Activated CD4-positive, alpha-beta memory T cell treated with anti-CD3 and anti-CD28 coated beads for 36 hours (primary cell): ENCODE measurements at regions of chr16 and their contacts with region 1.

Region 1: DNA sequence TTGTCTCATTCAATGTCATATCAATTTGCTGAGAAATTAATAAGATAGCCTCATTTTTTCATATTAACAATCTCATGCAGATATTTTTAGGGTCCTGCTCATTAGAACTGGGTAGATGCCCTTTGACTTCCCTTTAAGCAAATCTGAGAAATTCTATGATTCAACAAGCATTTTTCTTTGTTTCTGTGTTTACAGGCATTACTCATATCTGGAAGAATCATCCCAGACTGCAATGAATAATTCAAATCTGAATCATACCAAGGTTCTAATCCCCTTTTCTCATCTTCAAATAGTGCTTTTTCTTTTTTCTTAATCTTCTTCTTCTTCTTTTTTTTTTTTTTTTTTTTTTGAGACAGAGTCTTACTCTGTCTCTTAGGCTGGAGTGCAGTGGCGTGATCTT is 69.2 kb upstream of the KIFC3 start:
- DNase-seq: no peak
- H3K4me3 Mint-ChIP-seq: no peak overlapping the region
- H3K27ac Mint-ChIP-seq: no peak overlapping the region
- H3K4me1 Mint-ChIP-seq: peaks cover 11% of the 10 kb centered on the region
- H3K27me3 Mint-ChIP-seq: peaks cover 16% of the 10 kb centered on the region

Region 2: GRCh38 chr16:57810197-57811031 is 61.0 kb before region 1 on chr16:
- CTCF ChIA-PET with region 1: no interaction called
- POLR2A ChIA-PET with region 1: no interaction called
- intact Hi-C with region 1: loop called (anchors 1 kb)
- DNase-seq: peak; percentile 89
- H3K4me3 Mint-ChIP-seq: peak overlapping the region; percentile 28
- H3K27ac Mint-ChIP-seq: peak overlapping the region; percentile 53
- H3K4me1 Mint-ChIP-seq: peaks cover 25% of the 10 kb centered on the region
- H3K27me3 Mint-ChIP-seq: peaks cover 8% of the 10 kb centered on the region